Ovary (tissue), 10 donors: ENCODE measurements at regions of chr11 and their contacts with region 1.

Region 1: GRCh38 chr11:131370090-131370751 is at the start of gene NTM:
- DNase-seq: no peak
- H3K4me3 ChIP-seq: no peak within 1 kb of the TSS
- H3K27ac ChIP-seq: no peak within 1 kb of the TSS
- H3K4me1 ChIP-seq: no peaks in the 10 kb centered on the region
- H3K27me3 ChIP-seq: no peaks in the 10 kb centered on the region
- CTCF ChIP-seq: no peak
- EP300 ChIP-seq: no peak
- POLR2A ChIP-seq: no peak
- total RNA-seq, gene NTM: 0.27 to 0.87 (median 0.55) TPM in 4 of 7 donors, not detected in the others

Region 2: DNA sequence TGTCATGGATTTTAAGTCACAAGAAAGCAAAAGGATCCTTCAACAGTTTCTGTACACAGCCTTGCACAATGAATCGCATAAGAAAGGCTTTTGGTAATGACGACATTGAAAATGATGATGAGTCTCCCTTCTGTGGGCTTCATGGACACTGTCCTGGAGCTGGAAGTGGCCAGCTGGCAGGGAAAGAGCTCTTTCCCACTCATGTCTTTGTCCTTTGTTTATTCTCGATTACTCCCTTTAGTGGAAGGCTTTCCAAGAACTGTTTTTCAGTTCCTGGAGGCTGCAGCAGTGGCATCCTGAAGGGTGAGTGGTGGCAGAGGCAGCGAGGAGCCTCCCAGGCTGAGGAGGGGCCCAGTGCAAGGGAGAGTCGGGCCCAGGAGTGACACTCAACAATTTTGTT is 505.4 kb after region 1 on chr11:
- intact Hi-C with region 1: no loop called
- DNase-seq: no peak
- H3K4me3 ChIP-seq: no peak overlapping the region
- H3K27ac ChIP-seq: no peak overlapping the region
- H3K4me1 ChIP-seq: no peaks in the 10 kb centered on the region
- H3K27me3 ChIP-seq: no peaks in the 10 kb centered on the region
- CTCF ChIP-seq: no peak
- EP300 ChIP-seq: no peak
- POLR2A ChIP-seq: no peak

Region 3: DNA sequence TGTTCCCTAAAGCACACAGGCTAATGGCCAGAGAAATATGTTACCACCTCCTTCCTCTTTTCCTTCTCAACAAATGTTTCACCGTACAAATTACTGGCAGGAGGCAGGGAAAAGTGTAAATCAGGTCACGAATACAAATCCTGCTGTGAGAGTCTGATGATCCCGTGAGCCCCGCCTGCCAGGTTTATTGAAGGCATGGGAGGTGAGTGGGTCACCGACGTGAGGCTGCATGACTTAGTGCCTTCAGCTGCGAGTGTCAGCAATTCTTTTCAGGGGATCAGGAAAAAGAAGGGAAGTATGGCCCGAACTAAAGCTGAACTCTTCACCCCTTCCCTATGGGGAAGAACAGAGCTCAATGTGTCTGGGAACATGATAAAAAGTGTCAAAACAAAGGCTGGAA is 1995.9 kb after region 1 on chr11:
- intact Hi-C with region 1: loop called in 1 of 4 experiments (anchors 5 kb)
- DNase-seq: no peak
- H3K4me3 ChIP-seq: no peak overlapping the region
- H3K27ac ChIP-seq: no peak overlapping the region
- H3K4me1 ChIP-seq: no peaks in the 10 kb centered on the region
- H3K27me3 ChIP-seq: no peaks in the 10 kb centered on the region
- CTCF ChIP-seq: no peak
- EP300 ChIP-seq: no peak
- POLR2A ChIP-seq: no peak